Heart right ventricle (tissue), 16 donors: ENCODE measurements at regions of chr3 and their contacts with region 1.

Region 1: DNA sequence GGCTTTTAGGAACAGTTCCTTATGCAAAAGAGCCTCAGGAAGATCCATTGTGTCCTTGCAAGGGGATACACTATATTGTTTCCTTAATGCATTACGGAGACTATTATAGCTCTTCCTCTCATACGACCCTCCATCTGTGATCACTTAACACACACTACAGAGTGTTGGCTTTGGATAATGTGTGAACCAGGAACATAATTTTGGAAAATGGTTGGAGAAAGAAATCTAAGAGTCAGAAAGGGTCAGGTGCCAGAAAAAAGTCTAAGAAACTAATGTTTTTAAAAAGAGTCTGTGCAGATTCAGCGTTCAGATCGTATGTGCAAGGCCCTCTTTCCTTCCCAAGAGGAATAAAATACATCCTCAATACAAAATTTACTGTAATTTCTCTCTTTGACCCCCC is 27.3 kb downstream of the LRRN1 start:
- DNase-seq: no peak
- ATAC-seq: no peak
- H3K4me3 ChIP-seq: no peak overlapping the region
- H3K27ac ChIP-seq: no peak overlapping the region
- H3K4me1 ChIP-seq: no peaks in the 10 kb centered on the region
- H3K27me3 ChIP-seq: no peaks in the 10 kb centered on the region
- CTCF ChIP-seq: no peak

Region 2: GRCh38 chr3:3862534-3862933 is 36.0 kb after region 1 on chr3:
- intact Hi-C with region 1: loop called in 1 of 10 experiments (anchors 1 kb)
- DNase-seq: no peak
- ATAC-seq: no peak
- H3K4me3 ChIP-seq: no peak overlapping the region
- H3K27ac ChIP-seq: no peak overlapping the region
- H3K4me1 ChIP-seq: no peaks in the 10 kb centered on the region
- H3K27me3 ChIP-seq: no peaks in the 10 kb centered on the region
- CTCF ChIP-seq: no peak

Region 3: DNA sequence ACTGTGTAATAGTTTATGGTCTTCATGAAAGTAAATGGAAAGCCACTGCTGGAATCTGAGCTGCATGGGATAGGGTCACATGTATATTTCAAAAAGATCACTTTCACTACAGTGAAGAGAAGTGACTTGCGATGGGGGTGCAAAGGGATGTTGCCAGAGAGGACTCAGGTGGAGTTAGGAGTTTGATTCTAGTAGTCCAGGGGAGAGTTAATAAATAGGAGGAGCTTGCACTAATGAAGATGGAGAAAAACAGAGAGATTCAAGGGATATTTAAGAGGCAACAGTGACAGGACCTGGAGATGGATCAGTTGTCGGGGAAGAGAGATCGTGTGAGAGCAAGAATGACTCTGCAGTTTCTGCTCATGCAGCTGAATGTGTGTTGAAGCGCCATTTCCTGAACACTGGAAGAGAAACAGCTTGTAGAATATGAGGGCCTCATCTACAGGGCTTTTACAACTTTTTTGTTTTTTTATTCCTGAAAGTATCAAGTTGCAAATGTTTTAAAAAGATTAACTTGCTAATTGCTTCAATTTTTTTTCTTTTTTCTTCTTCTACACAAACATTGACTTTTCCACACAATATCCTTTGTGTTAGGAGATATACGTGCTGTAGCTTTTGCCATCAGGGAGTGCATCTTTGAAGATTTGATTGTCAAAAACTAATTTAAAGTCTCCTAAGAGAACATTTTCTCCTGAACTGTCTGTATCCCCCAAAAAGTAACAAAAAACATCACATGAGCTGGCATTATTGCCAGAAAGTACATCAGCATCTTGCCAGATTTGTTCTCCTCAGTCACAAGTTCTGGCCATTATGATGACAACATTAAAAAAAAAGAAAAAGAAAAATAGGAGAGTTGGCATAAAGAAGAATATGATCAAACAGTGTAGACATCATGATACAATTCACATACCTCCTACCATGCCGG is 514.2 kb after region 1 on chr3:
- intact Hi-C with region 1: no loop called
- DNase-seq: no peak
- ATAC-seq: peak in 3 of 8 donors; percentile 50 to 79 (median 71)
- H3K4me3 ChIP-seq: no peak overlapping the region
- H3K27ac ChIP-seq: peak overlapping the region in 1 of 10 donors; percentile 8
- H3K4me1 ChIP-seq: peaks cover 0 to 11% (median 0%) of the 10 kb centered on the region in 9 donors
- H3K27me3 ChIP-seq: no peaks in the 10 kb centered on the region
- CTCF ChIP-seq: no peak